ENCODE measurements at regions of chrX and their contacts with region 1.

Region 1: GRCh38 chrX:1657367-1658070 is 42.7 kb downstream of the ASMT start:
- DNase-seq: peak; percentile 87
- H3K4me3 Mint-ChIP-seq: peak overlapping the region; percentile 99
- H3K27ac Mint-ChIP-seq: peak overlapping the region; percentile 99
- H3K4me1 Mint-ChIP-seq: peaks cover 37% of the 10 kb centered on the region
- H3K27me3 Mint-ChIP-seq: no peaks in the 10 kb centered on the region

Region 2: DNA sequence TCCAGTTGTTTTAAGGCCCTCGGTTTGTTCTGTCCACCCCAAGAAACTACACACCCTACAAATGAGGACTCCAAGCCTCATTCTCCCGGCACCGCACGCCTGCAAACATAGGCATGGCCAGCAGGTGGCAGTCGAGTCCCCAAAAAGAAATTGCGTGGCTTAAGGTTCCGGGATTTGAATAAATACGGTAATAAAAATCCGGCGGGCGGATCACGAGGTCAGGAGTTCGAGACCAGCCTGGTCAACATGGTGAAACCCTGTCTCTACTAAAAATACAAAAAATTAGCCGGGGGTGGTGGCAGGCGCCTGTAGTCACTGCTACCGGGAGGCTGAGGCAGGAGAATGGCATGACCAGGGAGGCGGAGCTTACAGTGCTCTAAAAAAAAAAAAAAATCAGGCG is 410.7 kb before region 1 on chrX:
- CTCF ChIA-PET with region 1: no interaction called
- intact Hi-C with region 1: loop called (anchors 5 kb)
- DNase-seq: peak; percentile 94
- H3K4me3 Mint-ChIP-seq: no peak overlapping the region
- H3K27ac Mint-ChIP-seq: no peak overlapping the region
- H3K4me1 Mint-ChIP-seq: peaks cover 33% of the 10 kb centered on the region
- H3K27me3 Mint-ChIP-seq: no peaks in the 10 kb centered on the region

Region 3: GRCh38 chrX:1591102-1591900 is 66.2 kb before region 1 on chrX and contains the start of gene AKAP17A:
- CTCF ChIA-PET with region 1: no interaction called
- intact Hi-C with region 1: loop called (anchors 1 kb)
- DNase-seq: peak; percentile 98
- H3K4me3 Mint-ChIP-seq: peak within 1 kb of the TSS; percentile 91
- H3K27ac Mint-ChIP-seq: peak within 1 kb of the TSS; percentile 89
- H3K4me1 Mint-ChIP-seq: peaks cover 31% of the 10 kb centered on the region
- H3K27me3 Mint-ChIP-seq: no peaks in the 10 kb centered on the region
- total RNA-seq, gene AKAP17A: 59.2 to 60.5 TPM

Region 4: DNA sequence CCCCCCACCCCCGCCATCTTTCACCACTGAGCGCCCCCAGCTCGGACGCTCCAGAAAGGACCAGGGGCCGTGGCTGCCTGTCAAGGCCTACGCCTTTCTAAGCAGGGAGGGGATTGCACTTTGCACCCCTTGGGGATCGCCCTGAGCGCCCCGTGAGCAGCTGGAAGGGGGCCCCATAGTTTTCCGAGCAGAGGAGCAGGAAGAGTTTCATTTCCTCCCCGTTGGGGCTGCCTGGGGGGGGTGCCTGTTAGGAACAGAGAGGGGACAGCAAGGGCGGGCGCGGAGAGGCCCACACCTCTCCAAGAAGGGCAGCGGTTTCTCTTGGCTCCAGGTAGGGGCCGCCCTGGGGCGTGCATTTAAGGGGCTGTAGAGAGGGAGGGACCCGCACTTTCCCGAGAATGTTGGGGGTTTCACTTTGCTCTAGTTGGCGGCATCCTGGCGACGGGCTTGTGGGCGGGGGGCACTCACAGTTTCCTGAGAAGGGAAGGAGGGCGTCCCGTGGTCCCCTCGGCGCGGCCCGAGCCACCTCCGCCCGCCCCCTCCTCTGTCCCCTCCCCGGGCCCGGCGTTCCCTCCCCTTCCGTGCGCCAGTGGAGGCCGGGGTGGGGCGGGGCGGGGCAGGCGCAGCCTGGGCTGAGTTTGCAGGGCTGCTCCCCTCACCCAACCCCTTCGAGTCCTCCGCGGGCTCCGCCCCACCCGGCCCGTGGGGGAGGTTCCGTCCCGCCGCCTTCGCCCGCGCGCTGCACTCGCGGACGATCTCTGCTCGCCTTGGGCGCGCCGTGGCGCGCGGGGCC is 951.3 kb after region 1 on chrX:
- CTCF ChIA-PET with region 1: no interaction called
- intact Hi-C with region 1: loop called (anchors 1 kb)
- DNase-seq: peak; percentile 82
- H3K4me3 Mint-ChIP-seq: peak overlapping the region; percentile 90
- H3K27ac Mint-ChIP-seq: peak overlapping the region; percentile 82
- H3K4me1 Mint-ChIP-seq: peaks cover 45% of the 10 kb centered on the region
- H3K27me3 Mint-ChIP-seq: no peaks in the 10 kb centered on the region

Region 5: GRCh38 chrX:2707334-2707760 is 1049.8 kb after region 1 on chrX:
- CTCF ChIA-PET with region 1: no interaction called
- intact Hi-C with region 1: loop called (anchors 1 kb)
- DNase-seq: peak; percentile 90
- H3K4me3 Mint-ChIP-seq: peak overlapping the region; percentile 28
- H3K27ac Mint-ChIP-seq: peak overlapping the region; percentile 99
- H3K4me1 Mint-ChIP-seq: peaks cover 92% of the 10 kb centered on the region
- H3K27me3 Mint-ChIP-seq: no peaks in the 10 kb centered on the region

Measured in activated naive CD4-positive, alpha-beta T cell treated with anti-CD3 and anti-CD28 coated beads for 36 hours (primary cell).